GM12878 (cell line): ENCODE measurements at regions of chr5 and their contacts with region 1.

Region 1: GRCh38 chr5:37043688-37044087 is 167.1 kb downstream of the NIPBL start:
- DNase-seq: no peak
- ATAC-seq: peak; percentile 41
- H3K4me3 ChIP-seq: no peak overlapping the region
- H3K27ac ChIP-seq: no peak overlapping the region
- H3K4me1 ChIP-seq: no peaks in the 10 kb centered on the region
- H3K27me3 ChIP-seq: no peaks in the 10 kb centered on the region
- CTCF ChIP-seq: peak; percentile 24 to 37 (median 33); a peak in 4 of 6 replicates
- EP300 ChIP-seq: no peak
- POLR2A ChIP-seq: no peak
- RAD21 ChIP-seq: peak; percentile 37; the same call in 1 of the 2 replicates

Region 2: GRCh38 chr5:36957953-36958559 is 85.6 kb before region 1 on chr5:
- CTCF ChIA-PET with region 1: no interaction called
- POLR2A ChIA-PET with region 1: no interaction called
- RAD21 ChIA-PET with region 1: no interaction called
- SMC1A ChIA-PET with region 1: no interaction called
- in situ Hi-C with region 1: no loop called
- intact Hi-C with region 1: no loop called
- DNase-seq: no peak
- ATAC-seq: no peak
- H3K4me3 ChIP-seq: no peak overlapping the region
- H3K27ac ChIP-seq: no peak overlapping the region
- H3K4me1 ChIP-seq: no peaks in the 10 kb centered on the region
- H3K27me3 ChIP-seq: no peaks in the 10 kb centered on the region
- CTCF ChIP-seq: no peak
- EP300 ChIP-seq: no peak
- POLR2A ChIP-seq: no peak
- RAD21 ChIP-seq: no peak

Region 3: DNA sequence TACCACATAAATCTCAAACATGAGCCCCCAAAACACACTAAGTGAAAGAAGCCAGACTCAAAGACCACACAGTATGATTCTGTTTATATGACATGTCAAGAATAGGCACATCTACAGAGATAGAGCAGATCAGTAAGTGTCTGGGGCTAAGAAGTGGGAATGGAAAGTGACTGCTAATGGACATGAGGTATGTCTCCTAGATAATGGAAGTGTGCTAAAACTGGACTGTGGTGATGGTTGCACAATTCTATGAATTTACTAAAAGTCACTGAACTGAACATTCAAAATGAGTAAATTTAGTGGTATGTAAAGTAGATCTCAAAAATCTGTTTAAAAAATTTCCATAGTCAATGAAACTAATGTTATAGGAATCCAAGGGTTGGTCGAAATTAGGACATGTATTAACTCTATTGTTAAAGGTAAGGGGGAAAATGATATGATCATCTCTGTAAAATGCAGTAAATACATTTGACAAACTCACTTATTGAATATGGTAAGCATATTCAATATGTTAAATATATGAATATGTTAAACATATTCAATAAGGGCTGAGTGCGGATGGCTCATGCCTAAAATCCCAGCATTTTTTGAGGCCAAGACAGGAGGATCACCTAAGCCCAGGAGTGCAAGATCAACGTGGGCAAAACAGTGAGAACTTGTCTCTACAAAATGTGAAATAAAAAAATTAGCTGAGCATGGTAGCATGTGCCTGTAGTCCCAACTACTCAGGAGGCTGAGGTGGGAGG is 275.5 kb after region 1 on chr5:
- CTCF ChIA-PET with region 1: no interaction called
- POLR2A ChIA-PET with region 1: no interaction called
- RAD21 ChIA-PET with region 1: no interaction called
- SMC1A ChIA-PET with region 1: no interaction called
- in situ Hi-C with region 1: no loop called
- intact Hi-C with region 1: loop called (anchors 10 kb)
- DNase-seq: no peak
- ATAC-seq: no peak
- H3K4me3 ChIP-seq: no peak overlapping the region
- H3K27ac ChIP-seq: no peak overlapping the region
- H3K4me1 ChIP-seq: no peaks in the 10 kb centered on the region
- H3K27me3 ChIP-seq: no peaks in the 10 kb centered on the region
- CTCF ChIP-seq: no peak
- EP300 ChIP-seq: no peak
- POLR2A ChIP-seq: no peak
- RAD21 ChIP-seq: no peak